Activated naive CD4-positive, alpha-beta T cell treated with anti-CD3 and anti-CD28 coated beads, Interleukin-2, amount 10 ng/mL, durations not matched to agents 7 days and 5 days (primary cell): ENCODE measurements at regions of chr3 and their contacts with region 1.

Region 1: DNA sequence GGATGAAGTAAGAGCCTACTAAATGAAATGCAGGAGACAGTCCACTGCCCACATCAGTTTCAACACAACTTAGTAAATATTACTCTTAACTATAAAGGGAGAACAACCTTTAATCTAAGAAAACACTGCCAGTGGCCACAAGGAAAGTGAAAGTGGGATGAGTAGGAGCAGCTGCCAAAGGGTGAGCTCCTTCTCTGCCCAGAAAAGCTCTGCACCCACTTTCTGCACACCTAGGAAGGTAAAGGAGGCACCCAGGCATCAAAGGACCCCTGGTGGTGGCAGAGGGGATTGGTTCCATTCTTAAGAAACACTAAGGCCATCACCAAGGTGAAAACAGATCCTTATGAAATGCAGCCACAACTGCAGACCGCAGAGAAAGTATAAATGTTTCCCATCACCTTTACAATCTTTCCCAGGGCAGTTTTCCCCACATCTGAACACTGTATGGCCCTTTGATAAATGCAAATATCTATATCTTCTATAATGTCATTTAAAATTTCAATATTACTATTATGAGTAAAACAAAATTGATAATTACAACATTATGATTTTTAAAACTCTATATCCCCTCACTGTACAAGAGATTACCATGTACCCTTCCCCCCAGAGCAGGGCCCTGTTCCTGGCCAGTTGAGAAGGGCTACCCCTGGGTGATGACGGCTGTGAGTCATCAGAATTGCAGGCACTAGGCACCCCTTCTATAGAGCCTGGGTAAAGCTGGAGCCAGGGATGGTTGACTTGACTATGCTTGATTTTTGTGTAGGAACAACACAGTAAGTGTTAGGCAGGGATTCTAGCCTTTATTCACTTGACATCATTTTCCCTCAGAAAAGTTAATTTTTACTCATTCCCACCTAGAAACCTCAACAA is 92.0 kb downstream of the SNRK start:
- DNase-seq: peak; percentile 84
- H3K4me3 Mint-ChIP-seq: no peak overlapping the region
- H3K27ac Mint-ChIP-seq: no peak overlapping the region
- H3K4me1 Mint-ChIP-seq: peaks cover 16% of the 10 kb centered on the region
- H3K27me3 Mint-ChIP-seq: peaks cover 5% of the 10 kb centered on the region

Region 2: GRCh38 chr3:43389388-43390254 is 11.3 kb after region 1 on chr3:
- CTCF ChIA-PET with region 1: interaction called, 17 read pairs
- DNase-seq: peak; percentile 83
- H3K4me3 Mint-ChIP-seq: peak overlapping the region; percentile 2
- H3K27ac Mint-ChIP-seq: peak overlapping the region; percentile 96
- H3K4me1 Mint-ChIP-seq: peaks cover 61% of the 10 kb centered on the region
- H3K27me3 Mint-ChIP-seq: peaks cover 20% of the 10 kb centered on the region